ENCODE measurements at regions of chr15 and their contacts with region 1.

Region 1: DNA sequence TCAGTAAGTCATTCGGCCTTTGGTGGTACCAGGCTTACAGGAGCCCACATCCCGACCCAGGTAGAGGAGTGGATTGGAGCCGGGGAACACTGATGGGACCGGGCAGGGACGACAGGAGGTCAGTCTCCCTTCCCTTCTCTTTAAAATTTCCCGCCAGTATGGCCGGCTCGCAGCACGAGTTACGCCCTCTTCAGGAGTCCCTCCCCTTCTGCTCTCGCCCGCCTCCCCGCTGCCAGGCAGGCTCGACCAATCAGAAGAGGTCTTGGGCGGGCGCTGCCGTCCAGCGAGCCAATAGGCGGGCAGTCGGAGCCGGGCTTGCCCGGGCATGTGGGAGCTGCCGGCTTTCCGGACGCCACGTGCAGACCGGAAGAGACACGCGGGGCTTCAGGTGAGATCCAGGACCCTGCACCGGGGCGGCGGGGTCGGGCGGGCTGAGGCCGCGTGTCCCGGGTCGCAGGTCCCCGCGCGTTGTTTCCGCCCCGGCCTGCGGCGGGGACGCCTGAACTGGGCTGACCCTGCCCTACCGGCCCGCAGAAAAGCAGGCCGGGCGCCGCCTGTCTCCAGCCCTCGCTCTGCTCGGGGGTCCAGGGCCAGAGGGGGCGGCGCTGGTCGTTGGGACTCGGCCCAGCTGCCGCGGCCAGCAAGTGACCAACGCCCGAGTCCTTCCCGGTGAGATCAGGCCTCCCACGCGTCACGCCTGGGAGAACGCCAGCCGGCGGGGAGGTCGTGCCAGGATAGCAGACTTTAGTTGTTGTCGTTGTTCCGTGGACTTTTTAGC is at the start of gene AEN:
- DNase-seq: peak; percentile 97
- H3K4me3 Mint-ChIP-seq: peak within 1 kb of the TSS; percentile 85
- H3K27ac Mint-ChIP-seq: peak within 1 kb of the TSS; percentile 91
- H3K4me1 Mint-ChIP-seq: peaks cover 42% of the 10 kb centered on the region
- H3K27me3 Mint-ChIP-seq: peaks cover 2% of the 10 kb centered on the region
- total RNA-seq, gene AEN: 32.7 to 33.5 TPM

Region 2: DNA sequence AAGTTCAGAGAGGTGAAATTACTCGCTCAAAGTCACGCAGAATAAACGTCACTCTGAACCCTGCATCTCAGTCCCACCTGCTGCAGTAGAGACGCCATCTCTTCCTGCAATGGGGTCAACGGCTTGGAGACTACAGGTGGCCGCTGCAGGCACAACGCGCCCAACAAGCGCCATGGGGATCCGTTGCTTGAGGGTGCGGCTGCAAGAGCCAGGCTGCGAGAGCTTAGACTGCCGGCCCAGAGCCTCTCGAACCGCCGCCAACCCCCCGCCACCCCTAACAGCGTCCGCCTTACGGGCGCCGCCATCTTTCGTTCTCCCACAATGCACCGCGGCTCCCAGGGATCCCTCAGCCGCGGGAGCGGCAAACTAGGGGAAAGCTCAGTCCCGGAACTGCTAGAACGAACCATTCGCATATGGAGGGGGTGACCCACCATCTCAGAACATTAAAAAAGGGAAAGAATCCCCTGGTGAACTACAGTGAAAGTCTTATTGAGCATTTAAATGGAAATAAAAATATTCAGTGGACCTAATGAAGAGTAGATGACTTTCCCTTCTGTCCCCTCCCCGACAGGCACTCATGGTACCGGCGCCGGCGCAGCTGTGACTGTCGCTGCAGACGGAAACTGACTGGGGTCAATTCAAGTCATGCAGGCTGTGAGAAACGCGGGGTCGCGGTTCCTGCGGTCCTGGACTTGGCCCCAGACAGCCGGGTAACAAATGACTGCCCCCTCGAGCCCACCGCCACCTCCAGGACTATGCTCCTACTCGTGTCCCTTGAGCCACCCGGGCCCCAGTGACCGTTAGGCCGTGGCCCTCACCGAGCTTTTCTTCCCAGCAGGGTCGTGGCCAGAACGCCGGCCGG is 153.9 kb before region 1 on chr15 and contains the starts of genes MRPL46 and MRPS11:
- CTCF ChIA-PET with region 1: interaction called, 10 read pairs
- POLR2A ChIA-PET with region 1: interaction called, 14 read pairs
- DNase-seq: peak; percentile 90
- H3K4me3 Mint-ChIP-seq: peak within 1 kb of the TSS; percentile 87
- H3K27ac Mint-ChIP-seq: peak within 1 kb of the TSS; percentile 93
- H3K4me1 Mint-ChIP-seq: peaks cover 42% of the 10 kb centered on the region
- H3K27me3 Mint-ChIP-seq: no peaks in the 10 kb centered on the region
- total RNA-seq, gene MRPL46: 20.3 to 23.9 TPM
- total RNA-seq, gene MRPS11: 48.5 to 50.3 TPM

Region 3: GRCh38 chr15:88638626-88639372 is 17.6 kb after region 1 on chr15 and contains the start of gene ISG20:
- CTCF ChIA-PET with region 1: interaction called, 29 read pairs
- POLR2A ChIA-PET with region 1: interaction called, 95 read pairs
- DNase-seq: peak; percentile 98
- H3K4me3 Mint-ChIP-seq: peak within 1 kb of the TSS; percentile 87
- H3K27ac Mint-ChIP-seq: peak within 1 kb of the TSS; percentile 95
- H3K4me1 Mint-ChIP-seq: peaks cover 70% of the 10 kb centered on the region
- H3K27me3 Mint-ChIP-seq: no peaks in the 10 kb centered on the region
- total RNA-seq, gene ISG20: 337 to 338 TPM

Region 4: GRCh38 chr15:88649286-88649733 is 28.1 kb after region 1 on chr15:
- CTCF ChIA-PET with region 1: interaction called, 12 read pairs
- POLR2A ChIA-PET with region 1: interaction called, 8 read pairs
- DNase-seq: peak; percentile 75
- H3K4me3 Mint-ChIP-seq: peak overlapping the region; percentile 26
- H3K27ac Mint-ChIP-seq: peak overlapping the region; percentile 84
- H3K4me1 Mint-ChIP-seq: peaks cover 72% of the 10 kb centered on the region
- H3K27me3 Mint-ChIP-seq: no peaks in the 10 kb centered on the region

Region 5: DNA sequence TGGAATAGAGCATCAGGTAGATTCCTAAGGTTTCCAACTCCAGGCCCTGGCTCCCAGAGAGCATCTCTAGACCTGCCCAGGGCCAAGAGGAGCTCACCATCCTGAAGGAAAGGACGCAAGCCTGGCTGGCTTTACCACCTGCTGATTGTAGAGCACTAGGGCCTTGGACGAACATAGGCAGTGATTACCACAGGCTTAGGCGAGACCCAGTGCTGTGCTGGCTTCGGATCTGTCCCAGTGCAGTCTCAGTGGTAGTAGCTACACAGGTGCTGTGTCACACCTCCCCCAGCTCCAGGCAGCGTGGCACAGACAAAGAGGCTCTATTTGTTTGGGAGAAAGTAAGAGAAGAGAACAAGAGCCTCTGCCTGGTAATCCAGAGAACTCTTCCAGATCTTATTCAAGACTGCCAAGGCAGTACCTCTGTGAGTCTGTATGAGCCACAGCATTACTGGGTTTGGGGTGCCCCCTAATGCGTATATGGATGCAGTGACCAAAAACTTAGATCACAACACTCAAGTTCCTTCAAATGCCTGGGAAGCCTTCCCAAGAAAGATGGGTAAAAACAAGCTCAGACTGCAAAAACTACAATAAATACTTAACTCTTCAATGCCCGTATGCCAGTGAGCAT is 43.1 kb after region 1 on chr15:
- CTCF ChIA-PET with region 1: interaction called, 22 read pairs
- POLR2A ChIA-PET with region 1: interaction called, 10 read pairs
- DNase-seq: peak; percentile 53
- H3K4me3 Mint-ChIP-seq: no peak overlapping the region
- H3K27ac Mint-ChIP-seq: no peak overlapping the region
- H3K4me1 Mint-ChIP-seq: no peaks in the 10 kb centered on the region
- H3K27me3 Mint-ChIP-seq: peaks cover 14% of the 10 kb centered on the region

Region 6: GRCh38 chr15:88834211-88834812 is 213.1 kb after region 1 on chr15:
- CTCF ChIA-PET with region 1: interaction called, 12 read pairs
- POLR2A ChIA-PET with region 1: interaction called, 3 read pairs
- DNase-seq: peak; percentile 38
- H3K4me3 Mint-ChIP-seq: no peak overlapping the region
- H3K27ac Mint-ChIP-seq: no peak overlapping the region
- H3K4me1 Mint-ChIP-seq: peaks cover 3% of the 10 kb centered on the region
- H3K27me3 Mint-ChIP-seq: no peaks in the 10 kb centered on the region

Region 7: GRCh38 chr15:89034288-89034687 is 413.1 kb after region 1 on chr15:
- CTCF ChIA-PET with region 1: no interaction called
- POLR2A ChIA-PET with region 1: no interaction called
- DNase-seq: no peak
- H3K4me3 Mint-ChIP-seq: no peak overlapping the region
- H3K27ac Mint-ChIP-seq: no peak overlapping the region
- H3K4me1 Mint-ChIP-seq: no peaks in the 10 kb centered on the region
- H3K27me3 Mint-ChIP-seq: peaks cover 35% of the 10 kb centered on the region